Activated naive CD4-positive, alpha-beta T cell treated with anti-CD3 and anti-CD28 coated beads for 36 hours (primary cell): ENCODE measurements at regions of chr1 and their contacts with region 1.

Region 1: GRCh38 chr1:101025657-101026504 is at the start of gene DPH5:
- DNase-seq: peak; percentile 92
- H3K4me3 Mint-ChIP-seq: peak within 1 kb of the TSS; percentile 99
- H3K27ac Mint-ChIP-seq: peak within 1 kb of the TSS; percentile 98
- H3K4me1 Mint-ChIP-seq: peaks cover 58% of the 10 kb centered on the region
- H3K27me3 Mint-ChIP-seq: no peaks in the 10 kb centered on the region
- total RNA-seq, gene DPH5: 61.7 to 66.3 TPM

Region 2: DNA sequence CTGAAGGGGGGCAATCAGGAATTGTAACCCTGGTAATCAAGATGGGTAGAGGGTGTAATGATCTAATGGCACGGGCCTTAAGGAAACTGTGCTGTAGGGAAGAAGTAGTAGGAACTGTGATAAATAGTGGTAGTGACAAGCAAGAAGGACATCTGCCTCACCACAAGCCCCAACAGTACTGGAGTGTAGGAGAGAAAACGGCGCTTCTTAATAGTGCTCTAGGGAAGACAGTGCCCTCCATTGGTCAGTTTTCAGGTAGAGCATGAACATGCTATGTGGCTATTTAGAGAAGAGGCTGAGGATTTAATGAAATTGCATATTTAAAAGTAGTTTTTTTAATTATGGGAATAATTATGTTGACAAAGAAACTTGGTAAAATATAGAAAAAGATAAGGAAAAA is 97.8 kb before region 1 on chr1:
- CTCF ChIA-PET with region 1: no interaction called
- intact Hi-C with region 1: loop called (anchors 1 kb)
- DNase-seq: peak; percentile 49
- H3K4me3 Mint-ChIP-seq: no peak overlapping the region
- H3K27ac Mint-ChIP-seq: no peak overlapping the region
- H3K4me1 Mint-ChIP-seq: peaks cover 30% of the 10 kb centered on the region
- H3K27me3 Mint-ChIP-seq: no peaks in the 10 kb centered on the region

Region 3: DNA sequence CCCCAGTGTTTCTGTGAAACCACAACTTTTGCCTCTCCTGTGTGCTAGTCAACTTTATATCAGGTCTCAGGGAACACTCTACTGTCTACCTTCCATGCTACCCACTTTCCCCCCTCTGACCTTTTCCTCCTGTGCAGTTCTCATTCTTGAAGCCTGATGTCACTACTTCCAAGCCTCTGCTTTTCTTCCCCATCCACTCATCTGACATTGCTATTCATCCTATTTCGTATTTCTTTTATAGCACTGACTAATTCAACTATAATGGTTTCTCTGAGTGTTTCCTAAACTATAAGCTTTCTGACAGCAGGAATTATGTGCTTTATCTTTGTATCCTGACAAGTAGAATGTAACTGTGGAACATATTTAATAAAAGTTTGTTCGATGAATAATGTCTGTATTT is 17.9 kb after region 1 on chr1:
- CTCF ChIA-PET with region 1: no interaction called
- intact Hi-C with region 1: no loop called
- DNase-seq: no peak
- H3K4me3 Mint-ChIP-seq: no peak overlapping the region
- H3K27ac Mint-ChIP-seq: no peak overlapping the region
- H3K4me1 Mint-ChIP-seq: peaks cover 12% of the 10 kb centered on the region
- H3K27me3 Mint-ChIP-seq: no peaks in the 10 kb centered on the region

Region 4: DNA sequence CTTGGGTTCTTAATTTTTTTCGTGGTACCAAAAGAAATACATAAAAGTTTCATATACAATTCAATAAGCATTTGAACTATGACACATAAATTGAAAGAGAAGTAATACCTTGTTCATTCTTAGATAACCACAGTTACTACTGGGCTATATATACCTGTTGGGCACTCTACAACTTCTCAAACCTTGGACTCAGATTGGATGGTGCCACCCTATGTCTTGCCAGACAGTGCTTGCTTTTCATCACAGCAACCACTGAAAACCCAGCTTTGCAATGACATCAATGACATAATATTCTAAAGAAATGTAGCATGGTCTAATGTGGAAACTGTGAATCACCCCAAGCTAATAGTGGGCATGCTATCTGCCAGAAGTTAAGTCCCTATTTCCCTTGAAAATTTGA is 62.5 kb after region 1 on chr1:
- CTCF ChIA-PET with region 1: no interaction called
- intact Hi-C with region 1: loop called (anchors 2 kb)
- DNase-seq: no peak
- H3K4me3 Mint-ChIP-seq: no peak overlapping the region
- H3K27ac Mint-ChIP-seq: no peak overlapping the region
- H3K4me1 Mint-ChIP-seq: peaks cover 16% of the 10 kb centered on the region
- H3K27me3 Mint-ChIP-seq: no peaks in the 10 kb centered on the region

Region 5: GRCh38 chr1:101122452-101123166 is 96.7 kb after region 1 on chr1:
- CTCF ChIA-PET with region 1: no interaction called
- intact Hi-C with region 1: loop called (anchors 5 kb)
- DNase-seq: peak; percentile 35
- H3K4me3 Mint-ChIP-seq: no peak overlapping the region
- H3K27ac Mint-ChIP-seq: no peak overlapping the region
- H3K4me1 Mint-ChIP-seq: peaks cover 51% of the 10 kb centered on the region
- H3K27me3 Mint-ChIP-seq: no peaks in the 10 kb centered on the region